Activated CD4-positive, alpha-beta T cell treated with anti-CD3 and anti-CD28 coated beads for 36 hours (primary cell): ENCODE measurements at regions of chr18 and their contacts with region 1.

Region 1: GRCh38 chr18:13268158-13269012 is 49.8 kb downstream of the LDLRAD4 start:
- DNase-seq: no peak
- ATAC-seq: no peak
- H3K4me3 Mint-ChIP-seq: peak overlapping the region; percentile 2
- H3K27ac Mint-ChIP-seq: peak overlapping the region; percentile 85
- H3K4me1 Mint-ChIP-seq: peaks cover 77% of the 10 kb centered on the region
- H3K27me3 Mint-ChIP-seq: no peaks in the 10 kb centered on the region

Region 2: GRCh38 chr18:13159579-13159978 is 108.8 kb before region 1 on chr18:
- CTCF ChIA-PET with region 1: no interaction called
- POLR2A ChIA-PET with region 1: no interaction called
- intact Hi-C with region 1: no loop called
- DNase-seq: no peak
- ATAC-seq: peak; percentile 55
- H3K4me3 Mint-ChIP-seq: no peak overlapping the region
- H3K27ac Mint-ChIP-seq: no peak overlapping the region
- H3K4me1 Mint-ChIP-seq: peaks cover 2% of the 10 kb centered on the region
- H3K27me3 Mint-ChIP-seq: peaks cover 2% of the 10 kb centered on the region

Region 3: DNA sequence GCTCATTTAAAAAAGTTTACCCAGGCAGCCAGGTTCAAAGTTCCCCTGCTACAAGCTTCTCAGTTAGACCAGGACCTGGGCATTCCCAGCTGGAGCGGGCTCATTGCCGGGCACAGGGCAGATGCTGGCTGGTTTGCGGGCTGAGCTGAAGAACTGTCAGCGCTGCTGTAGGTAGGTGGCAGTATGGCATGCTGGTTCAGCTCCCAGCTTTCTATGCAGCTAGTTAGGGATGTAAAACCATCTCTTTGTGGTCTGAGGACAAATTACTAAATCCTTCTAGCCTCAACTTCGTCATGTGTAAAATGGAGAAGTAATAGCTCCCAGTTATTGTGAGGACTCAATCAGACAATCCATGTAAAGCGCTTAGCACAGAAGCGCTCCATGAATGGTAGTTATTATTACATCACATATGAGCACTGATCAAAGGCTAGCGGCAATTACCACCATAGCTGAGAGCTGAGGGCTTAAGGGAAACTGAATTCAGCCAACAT is 52.2 kb before region 1 on chr18:
- CTCF ChIA-PET with region 1: interaction called, 6 read pairs
- POLR2A ChIA-PET with region 1: interaction called, 3 read pairs
- intact Hi-C with region 1: loop called (anchors 1 to 2 kb)
- DNase-seq: peak; percentile 79
- ATAC-seq: peak; percentile 70
- H3K4me3 Mint-ChIP-seq: peak overlapping the region; percentile 77
- H3K27ac Mint-ChIP-seq: no peak overlapping the region
- H3K4me1 Mint-ChIP-seq: peaks cover 27% of the 10 kb centered on the region
- H3K27me3 Mint-ChIP-seq: peaks cover 15% of the 10 kb centered on the region

Region 4: DNA sequence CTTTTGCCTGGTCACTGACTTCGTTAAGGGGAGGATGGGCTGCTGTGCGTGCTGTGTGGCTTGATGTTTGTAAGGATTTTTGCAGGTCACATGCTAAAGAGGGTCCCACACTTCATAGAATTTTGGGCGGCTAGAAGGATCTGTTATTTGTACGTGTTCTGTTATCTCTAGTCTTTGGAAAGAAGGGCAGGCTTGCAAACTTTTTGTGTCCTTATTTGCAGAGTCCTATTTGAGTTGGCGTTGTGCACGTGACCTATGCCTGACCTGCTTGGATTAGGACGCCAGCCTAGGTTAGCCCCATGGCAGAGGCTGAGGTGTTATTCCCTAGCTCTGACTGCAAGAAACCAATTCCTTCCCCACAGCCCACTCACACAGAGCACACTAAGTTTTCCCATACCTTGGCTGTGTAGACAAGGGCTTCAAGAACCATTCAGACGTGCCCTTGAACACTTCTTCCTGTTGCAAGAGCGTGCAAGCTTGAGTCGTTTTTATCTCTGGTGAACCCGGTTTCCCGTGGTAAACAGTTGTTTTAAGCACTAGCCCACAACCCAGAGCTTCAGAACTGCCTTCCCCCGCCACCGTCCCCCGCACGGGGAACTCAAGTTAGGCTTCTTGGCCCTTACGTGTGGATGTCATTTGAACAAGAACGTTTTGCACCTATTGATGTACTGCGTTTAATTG is 44.8 kb after region 1 on chr18:
- CTCF ChIA-PET with region 1: no interaction called
- POLR2A ChIA-PET with region 1: no interaction called
- intact Hi-C with region 1: loop called in 1 of 2 experiments (anchors 5 kb)
- DNase-seq: peak; percentile 44
- ATAC-seq: peak; percentile 69
- H3K4me3 Mint-ChIP-seq: peak overlapping the region; percentile 30
- H3K27ac Mint-ChIP-seq: peak overlapping the region; percentile 67
- H3K4me1 Mint-ChIP-seq: peaks cover 38% of the 10 kb centered on the region
- H3K27me3 Mint-ChIP-seq: no peaks in the 10 kb centered on the region

Region 5: GRCh38 chr18:13435596-13436327 is 167.4 kb after region 1 on chr18:
- CTCF ChIA-PET with region 1: interaction called, 3 read pairs
- POLR2A ChIA-PET with region 1: interaction called, 4 read pairs
- intact Hi-C with region 1: loop called (anchors 1 to 2 kb)
- DNase-seq: peak; percentile 23
- ATAC-seq: no peak
- H3K4me3 Mint-ChIP-seq: no peak overlapping the region
- H3K27ac Mint-ChIP-seq: peak overlapping the region; percentile 86
- H3K4me1 Mint-ChIP-seq: peaks cover 67% of the 10 kb centered on the region
- H3K27me3 Mint-ChIP-seq: no peaks in the 10 kb centered on the region

Region 6: DNA sequence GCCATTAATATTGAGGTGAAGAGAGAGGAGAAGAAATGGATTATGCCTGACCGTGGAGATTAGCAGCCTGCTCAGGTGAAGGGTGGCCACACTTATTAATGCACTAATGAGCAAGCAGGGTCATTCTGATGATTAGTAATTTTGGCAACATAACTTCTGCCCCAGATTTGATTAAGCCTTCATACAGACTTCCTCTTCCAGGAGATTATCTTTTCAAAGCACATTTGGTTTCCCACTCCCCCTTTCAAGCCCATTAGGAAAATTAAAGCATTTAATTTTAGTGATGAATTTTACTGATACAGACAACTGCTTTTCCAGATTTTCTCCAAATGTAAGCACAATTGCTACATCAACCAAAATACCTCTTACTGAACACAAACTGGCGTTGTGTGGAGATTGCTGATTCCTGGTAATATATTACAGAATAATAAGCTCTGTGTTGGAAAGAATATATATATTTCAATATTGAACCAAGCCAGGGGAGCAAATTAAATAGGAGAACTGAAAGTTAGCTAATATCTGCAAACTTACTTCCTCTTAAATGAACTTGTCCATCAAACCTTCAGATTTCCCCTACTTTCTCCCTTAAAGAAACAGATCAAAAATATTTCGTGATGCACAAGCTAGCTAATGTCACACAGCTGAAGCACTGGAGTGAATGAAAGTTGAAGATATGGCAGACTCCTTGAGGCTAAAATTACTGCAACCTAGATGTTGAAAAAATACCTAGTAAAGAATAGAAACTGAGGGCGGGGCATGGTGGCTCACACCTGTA is 317.2 kb after region 1 on chr18:
- CTCF ChIA-PET with region 1: no interaction called
- POLR2A ChIA-PET with region 1: no interaction called
- intact Hi-C with region 1: loop called in 1 of 2 experiments (anchors 5 kb)
- DNase-seq: no peak
- ATAC-seq: no peak
- H3K4me3 Mint-ChIP-seq: no peak overlapping the region
- H3K27ac Mint-ChIP-seq: peak overlapping the region; percentile 35
- H3K4me1 Mint-ChIP-seq: peaks cover 56% of the 10 kb centered on the region
- H3K27me3 Mint-ChIP-seq: no peaks in the 10 kb centered on the region